ENCODE measurements at regions of chr2 and their contacts with region 1.

Region 1: GRCh38 chr2:97740590-97741182 is 27.3 kb downstream of the ZAP70 start:
- DNase-seq: peak; percentile 14
- ATAC-seq: peak; percentile 84
- H3K4me3 ChIP-seq: no peak overlapping the region
- H3K27ac ChIP-seq: no peak overlapping the region
- H3K4me1 ChIP-seq: peaks cover 2% of the 10 kb centered on the region; the same call in 1 of the 2 replicates
- H3K27me3 ChIP-seq: no peaks in the 10 kb centered on the region; the same call in 1 of the 2 replicates
- CTCF ChIP-seq: peak; percentile 49
- POLR2A ChIP-seq: no peak
- RAD21 ChIP-seq: peak; percentile 44

Region 2: GRCh38 chr2:97713296-97714083 is 27.2 kb before region 1 on chr2 and contains the start of gene ZAP70:
- CTCF ChIA-PET with region 1: no interaction called
- POLR2A ChIA-PET with region 1: no interaction called
- dilution Hi-C with region 1: no loop called
- in situ Hi-C with region 1: no loop called
- intact Hi-C with region 1: no loop called
- DNase-seq: no peak
- ATAC-seq: no peak
- H3K4me3 ChIP-seq: no peak within 1 kb of the TSS
- H3K27ac ChIP-seq: no peak within 1 kb of the TSS
- H3K4me1 ChIP-seq: no peaks in the 10 kb centered on the region
- H3K27me3 ChIP-seq: peaks cover 22% of the 10 kb centered on the region
- CTCF ChIP-seq: no peak
- POLR2A ChIP-seq: no peak
- RAD21 ChIP-seq: no peak
- total RNA-seq, gene ZAP70: under 0.01 TPM in 1 of 2 replicates, not detected in the other

Region 3: DNA sequence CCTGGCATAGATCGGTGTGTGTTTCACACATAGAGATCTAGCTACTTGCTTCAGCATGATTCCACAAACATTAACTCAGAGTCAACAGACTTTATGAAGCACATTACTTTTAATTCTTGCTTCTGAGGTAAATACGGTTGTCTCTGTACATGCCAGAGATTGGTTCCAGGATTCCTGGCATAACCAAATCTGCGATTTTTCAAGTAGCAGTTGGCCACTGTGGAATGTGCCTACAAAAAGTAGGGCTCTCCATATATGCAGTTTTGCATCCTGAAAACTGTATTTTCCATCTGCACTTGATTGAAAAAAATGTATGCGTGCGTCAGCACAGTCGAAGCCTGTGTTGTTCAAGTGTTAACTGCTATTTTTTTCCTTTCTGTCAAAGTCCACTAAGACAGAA is 57.7 kb after region 1 on chr2:
- CTCF ChIA-PET with region 1: no interaction called
- POLR2A ChIA-PET with region 1: no interaction called
- dilution Hi-C with region 1: no loop called
- in situ Hi-C with region 1: no loop called
- intact Hi-C with region 1: no loop called
- DNase-seq: no peak
- ATAC-seq: no peak
- H3K4me3 ChIP-seq: no peak overlapping the region
- H3K27ac ChIP-seq: no peak overlapping the region
- H3K4me1 ChIP-seq: peaks cover 4% of the 10 kb centered on the region
- H3K27me3 ChIP-seq: no peaks in the 10 kb centered on the region
- CTCF ChIP-seq: no peak
- POLR2A ChIP-seq: no peak
- RAD21 ChIP-seq: no peak

Region 4: DNA sequence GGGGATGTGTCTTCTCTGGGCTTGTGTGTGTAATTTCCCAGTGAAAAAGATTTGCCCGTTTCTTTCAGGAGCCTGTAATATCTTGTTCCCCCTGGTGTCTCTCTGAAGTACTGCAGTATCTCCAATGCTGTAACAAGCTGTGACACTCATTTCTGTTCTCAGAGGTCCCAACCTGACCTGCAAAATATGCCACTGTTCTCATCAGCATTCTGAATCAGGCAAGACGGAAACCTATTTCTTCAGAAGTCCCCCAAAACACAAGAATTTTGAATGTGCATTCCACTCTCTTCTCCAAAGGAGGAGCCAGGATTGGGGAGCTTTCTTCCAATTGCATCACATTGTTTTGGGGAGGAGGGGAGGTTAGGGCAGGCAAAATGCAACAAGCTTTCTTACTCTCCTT is 528.6 kb after region 1 on chr2:
- CTCF ChIA-PET with region 1: interaction called, 3 read pairs
- POLR2A ChIA-PET with region 1: no interaction called
- dilution Hi-C with region 1: no loop called
- in situ Hi-C with region 1: no loop called
- intact Hi-C with region 1: loop called (anchors 1 kb)
- DNase-seq: peak; percentile 63
- ATAC-seq: peak; percentile 95
- H3K4me3 ChIP-seq: no peak overlapping the region
- H3K27ac ChIP-seq: no peak overlapping the region
- H3K4me1 ChIP-seq: no peaks in the 10 kb centered on the region
- H3K27me3 ChIP-seq: peaks cover 6% of the 10 kb centered on the region
- CTCF ChIP-seq: peak; percentile 67
- POLR2A ChIP-seq: no peak
- RAD21 ChIP-seq: peak; percentile 71